Mammary epithelial cell (primary cell): ENCODE measurements at regions of chr1 and their contacts with region 1.

Region 1: GRCh38 chr1:20786253-20787028 is 666 bp downstream of the HP1BP3 start:
- DNase-seq: peak; percentile 95
- H3K4me3 ChIP-seq: peak overlapping the region; percentile 77 to 99 (median 94)
- H3K27ac ChIP-seq: peak overlapping the region; percentile 91
- H3K4me1 ChIP-seq: peaks cover 21% of the 10 kb centered on the region
- H3K27me3 ChIP-seq: no peaks in the 10 kb centered on the region
- CTCF ChIP-seq: peak in 1 of 2 donors; percentile 5

Region 2: GRCh38 chr1:19567041-19567440 is 1219.4 kb before region 1 on chr1:
- CTCF ChIA-PET with region 1: no interaction called
- dilution Hi-C with region 1: no loop called
- in situ Hi-C with region 1: no loop called
- intact Hi-C with region 1: no loop called
- DNase-seq: no peak
- H3K4me3 ChIP-seq: no peak overlapping the region
- H3K27ac ChIP-seq: no peak overlapping the region
- H3K4me1 ChIP-seq: peaks cover 2% of the 10 kb centered on the region
- H3K27me3 ChIP-seq: no peaks in the 10 kb centered on the region
- CTCF ChIP-seq: no peak

Region 3: GRCh38 chr1:20702416-20702815 is 84.0 kb before region 1 on chr1:
- CTCF ChIA-PET with region 1: no interaction called
- dilution Hi-C with region 1: loop called (anchors 5 kb)
- in situ Hi-C with region 1: no loop called
- intact Hi-C with region 1: loop called (anchors 2 kb)
- DNase-seq: no peak
- H3K4me3 ChIP-seq: no peak overlapping the region
- H3K27ac ChIP-seq: no peak overlapping the region
- H3K4me1 ChIP-seq: peaks cover 13% of the 10 kb centered on the region
- H3K27me3 ChIP-seq: no peaks in the 10 kb centered on the region
- CTCF ChIP-seq: peak; percentile 27 to 57

Region 4: GRCh38 chr1:20727384-20728316 is 58.8 kb before region 1 on chr1:
- CTCF ChIA-PET with region 1: interaction called, 3 read pairs
- dilution Hi-C with region 1: loop called (anchors 10 kb)
- in situ Hi-C with region 1: no loop called
- intact Hi-C with region 1: loop called (anchors 1 kb)
- DNase-seq: no peak
- H3K4me3 ChIP-seq: no peak overlapping the region
- H3K27ac ChIP-seq: no peak overlapping the region
- H3K4me1 ChIP-seq: peaks cover 46% of the 10 kb centered on the region
- H3K27me3 ChIP-seq: no peaks in the 10 kb centered on the region
- CTCF ChIP-seq: no peak

Region 5: GRCh38 chr1:20732588-20733360 is 53.7 kb before region 1 on chr1 and contains the start of gene SH2D5:
- CTCF ChIA-PET with region 1: no interaction called
- dilution Hi-C with region 1: loop called (anchors 10 kb)
- in situ Hi-C with region 1: no loop called
- intact Hi-C with region 1: loop called (anchors 1 kb)
- DNase-seq: peak; percentile 98
- H3K4me3 ChIP-seq: peak within 1 kb of the TSS; percentile 43 to 76 (median 61)
- H3K27ac ChIP-seq: peak within 1 kb of the TSS; percentile 80
- H3K4me1 ChIP-seq: peaks cover 54% of the 10 kb centered on the region
- H3K27me3 ChIP-seq: no peaks in the 10 kb centered on the region
- CTCF ChIP-seq: peak in 1 of 2 donors; percentile 37
- total RNA-seq, gene SH2D5: 13.2 to 65.3 TPM

Region 6: DNA sequence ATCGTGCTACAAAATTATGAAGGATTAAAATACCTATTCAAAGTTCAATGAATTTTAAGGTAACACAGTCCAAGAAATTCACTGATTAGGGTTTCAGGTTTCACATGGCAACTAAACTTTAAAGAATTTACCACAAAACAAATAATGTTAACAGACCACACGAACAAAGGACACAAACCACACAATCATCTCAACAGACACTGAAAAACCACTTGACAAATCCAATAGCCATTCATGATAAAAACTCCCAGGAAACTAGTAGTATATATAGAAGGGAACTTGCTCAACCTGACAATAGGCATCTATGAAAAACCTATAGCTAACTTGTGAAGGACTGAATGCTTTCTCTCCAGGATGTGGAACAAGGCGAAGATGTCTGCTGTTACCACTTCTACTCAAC is 32.9 kb before region 1 on chr1:
- CTCF ChIA-PET with region 1: no interaction called
- dilution Hi-C with region 1: loop called (anchors 5 kb)
- in situ Hi-C with region 1: no loop called
- intact Hi-C with region 1: no loop called
- DNase-seq: peak; percentile 48
- H3K4me3 ChIP-seq: no peak overlapping the region
- H3K27ac ChIP-seq: no peak overlapping the region
- H3K4me1 ChIP-seq: no peaks in the 10 kb centered on the region
- H3K27me3 ChIP-seq: no peaks in the 10 kb centered on the region
- CTCF ChIP-seq: no peak

Region 7: DNA sequence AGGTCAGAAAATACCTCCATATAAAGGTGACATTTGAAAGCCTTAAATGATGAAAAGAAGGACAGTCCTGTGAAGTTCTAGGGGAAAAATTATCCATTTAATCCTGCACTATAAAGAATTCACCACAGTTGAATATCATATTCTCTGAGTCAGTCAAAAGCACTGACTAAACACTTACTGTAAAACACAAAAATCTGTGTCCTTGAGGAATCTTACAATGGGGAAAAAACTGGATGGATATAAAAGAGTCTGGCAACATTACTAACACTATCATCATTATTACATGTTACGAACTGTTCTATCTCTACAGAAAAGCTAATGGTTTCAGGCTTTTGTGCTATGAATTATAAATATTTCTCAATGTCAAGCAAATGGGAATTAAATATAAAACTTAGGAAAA is 43.1 kb after region 1 on chr1:
- CTCF ChIA-PET with region 1: no interaction called
- dilution Hi-C with region 1: loop called (anchors 5 kb)
- in situ Hi-C with region 1: no loop called
- intact Hi-C with region 1: no loop called
- DNase-seq: no peak
- H3K4me3 ChIP-seq: no peak overlapping the region
- H3K27ac ChIP-seq: no peak overlapping the region
- H3K4me1 ChIP-seq: no peaks in the 10 kb centered on the region
- H3K27me3 ChIP-seq: no peaks in the 10 kb centered on the region
- CTCF ChIP-seq: no peak

Region 8: GRCh38 chr1:21200767-21201166 is 414.3 kb after region 1 on chr1:
- CTCF ChIA-PET with region 1: no interaction called
- dilution Hi-C with region 1: no loop called
- in situ Hi-C with region 1: no loop called
- intact Hi-C with region 1: loop called (anchors 5 kb)
- DNase-seq: no peak
- H3K4me3 ChIP-seq: no peak overlapping the region
- H3K27ac ChIP-seq: no peak overlapping the region
- H3K4me1 ChIP-seq: no peaks in the 10 kb centered on the region
- H3K27me3 ChIP-seq: no peaks in the 10 kb centered on the region
- CTCF ChIP-seq: no peak